ENCODE measurements at regions of chr7 and their contacts with region 1.

Region 1: DNA sequence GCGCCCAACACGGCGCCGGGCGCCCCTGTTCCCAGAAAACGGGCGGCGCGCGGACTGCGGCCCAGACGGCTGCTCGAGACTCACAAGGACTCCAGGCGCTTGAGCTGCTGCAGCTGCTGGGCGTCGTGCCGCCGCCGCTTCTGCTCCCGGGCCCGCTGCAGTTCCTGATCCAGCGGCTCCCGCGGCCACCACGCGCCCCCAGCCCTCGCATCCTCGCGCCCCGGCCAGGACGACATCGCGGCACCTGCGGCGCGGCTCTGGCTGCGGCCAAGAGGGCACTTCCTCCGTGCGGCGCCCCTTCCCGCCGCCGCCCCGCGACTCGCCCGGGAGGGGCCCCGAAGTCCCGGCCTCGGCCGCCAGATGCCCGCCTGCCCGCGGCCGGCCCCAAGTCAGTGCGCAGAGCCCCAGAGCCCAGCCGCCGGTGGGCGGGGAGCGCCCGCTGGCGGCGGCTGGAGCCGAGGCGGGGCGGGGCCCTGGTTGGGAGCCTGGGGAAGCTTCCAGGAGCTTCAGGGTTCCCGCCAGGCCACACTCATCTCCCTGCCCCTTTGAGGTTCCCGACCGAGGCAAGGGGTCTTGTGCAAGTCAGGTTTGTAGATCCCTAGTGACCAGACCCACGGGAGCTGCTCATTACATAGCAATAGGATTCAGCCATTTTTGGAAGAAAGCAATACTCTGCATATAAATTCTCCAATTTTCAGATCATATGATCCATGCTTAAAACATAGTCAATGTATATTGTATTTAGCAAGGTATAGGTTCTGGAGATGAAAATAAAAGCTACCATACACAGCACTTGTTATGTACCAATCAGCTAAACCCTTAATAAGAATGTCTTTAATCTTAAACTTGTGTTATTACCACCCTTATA is 14.2 kb upstream of the FKBP9 start:
- DNase-seq: peak; percentile 84 to 93 (median 93)
- ATAC-seq: peak; percentile 97
- H3K4me3 ChIP-seq: peak overlapping the region; percentile 62
- H3K27ac ChIP-seq: peak overlapping the region; percentile 89
- H3K4me1 ChIP-seq: no peaks in the 10 kb centered on the region
- H3K27me3 ChIP-seq: no peaks in the 10 kb centered on the region

Region 2: DNA sequence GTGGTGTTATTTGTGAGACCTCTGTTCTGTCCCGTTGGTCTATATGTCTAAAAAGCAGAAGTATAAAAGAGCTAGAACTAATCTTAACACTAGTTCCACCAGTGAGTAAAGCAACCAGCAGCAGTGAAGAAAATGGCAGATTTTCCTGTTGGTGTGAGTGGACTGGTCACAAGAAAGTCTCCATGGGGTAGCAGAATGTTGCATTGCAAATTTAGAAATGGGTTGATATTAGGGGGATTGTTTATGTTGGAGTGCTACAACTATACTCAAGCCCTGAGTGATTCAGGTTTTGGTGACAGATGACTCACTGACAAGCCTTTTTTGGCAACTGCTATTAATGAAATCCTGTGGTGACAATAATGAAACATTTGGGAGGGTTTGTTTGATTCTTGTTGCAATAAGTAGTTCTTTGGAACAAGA is 442.1 kb before region 1 on chr7:
- intact Hi-C with region 1: no loop called
- DNase-seq: no peak
- ATAC-seq: peak; percentile 17 to 65
- H3K4me3 ChIP-seq: no peak overlapping the region
- H3K27ac ChIP-seq: no peak overlapping the region
- H3K4me1 ChIP-seq: peaks cover 7% of the 10 kb centered on the region
- H3K27me3 ChIP-seq: no peaks in the 10 kb centered on the region

Region 3: DNA sequence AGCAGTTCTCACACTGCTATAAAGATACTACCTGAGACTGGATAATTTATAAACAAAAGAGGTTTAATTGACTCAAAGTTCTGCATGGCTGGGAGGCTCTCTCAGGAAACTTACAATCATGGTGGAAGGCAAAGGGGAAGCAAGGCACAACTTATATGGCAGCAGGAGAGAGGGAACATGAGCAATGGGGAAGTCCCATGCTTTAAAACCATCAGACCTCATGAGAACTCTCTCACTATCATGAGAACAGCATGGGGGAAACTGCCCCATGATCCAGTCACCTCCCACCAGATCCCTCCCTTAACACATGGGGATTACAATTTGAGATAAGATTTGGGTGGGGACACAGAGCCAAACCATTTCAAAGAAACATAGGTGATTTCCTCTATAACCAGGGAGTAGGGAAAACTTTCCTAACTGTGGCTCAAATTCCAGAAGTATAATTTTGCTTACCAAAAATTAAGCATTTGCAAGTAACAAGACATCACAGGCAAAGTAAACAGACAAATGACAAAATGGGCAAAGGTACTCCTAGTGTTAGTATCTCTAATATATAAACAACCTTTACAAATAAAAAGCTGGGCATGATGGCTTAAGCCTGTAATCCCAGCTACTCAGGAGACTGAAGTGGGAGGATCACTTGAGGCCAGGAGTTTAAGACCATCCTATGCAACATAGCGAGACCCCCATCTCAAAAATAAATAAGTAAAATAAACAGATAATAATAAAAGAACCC is 139.4 kb before region 1 on chr7:
- intact Hi-C with region 1: no loop called
- DNase-seq: no peak
- ATAC-seq: no peak
- H3K4me3 ChIP-seq: no peak overlapping the region
- H3K27ac ChIP-seq: no peak overlapping the region
- H3K4me1 ChIP-seq: no peaks in the 10 kb centered on the region
- H3K27me3 ChIP-seq: no peaks in the 10 kb centered on the region

Region 4: GRCh38 chr7:32846701-32847100 is 96.3 kb before region 1 on chr7:
- intact Hi-C with region 1: loop called in 2 of 4 experiments (anchors 5 to 10 kb)
- DNase-seq: peak; percentile 87 to 96 (median 93)
- ATAC-seq: peak; percentile 97 to 99
- H3K4me3 ChIP-seq: no peak overlapping the region
- H3K27ac ChIP-seq: no peak overlapping the region
- H3K4me1 ChIP-seq: no peaks in the 10 kb centered on the region
- H3K27me3 ChIP-seq: no peaks in the 10 kb centered on the region

Region 5: DNA sequence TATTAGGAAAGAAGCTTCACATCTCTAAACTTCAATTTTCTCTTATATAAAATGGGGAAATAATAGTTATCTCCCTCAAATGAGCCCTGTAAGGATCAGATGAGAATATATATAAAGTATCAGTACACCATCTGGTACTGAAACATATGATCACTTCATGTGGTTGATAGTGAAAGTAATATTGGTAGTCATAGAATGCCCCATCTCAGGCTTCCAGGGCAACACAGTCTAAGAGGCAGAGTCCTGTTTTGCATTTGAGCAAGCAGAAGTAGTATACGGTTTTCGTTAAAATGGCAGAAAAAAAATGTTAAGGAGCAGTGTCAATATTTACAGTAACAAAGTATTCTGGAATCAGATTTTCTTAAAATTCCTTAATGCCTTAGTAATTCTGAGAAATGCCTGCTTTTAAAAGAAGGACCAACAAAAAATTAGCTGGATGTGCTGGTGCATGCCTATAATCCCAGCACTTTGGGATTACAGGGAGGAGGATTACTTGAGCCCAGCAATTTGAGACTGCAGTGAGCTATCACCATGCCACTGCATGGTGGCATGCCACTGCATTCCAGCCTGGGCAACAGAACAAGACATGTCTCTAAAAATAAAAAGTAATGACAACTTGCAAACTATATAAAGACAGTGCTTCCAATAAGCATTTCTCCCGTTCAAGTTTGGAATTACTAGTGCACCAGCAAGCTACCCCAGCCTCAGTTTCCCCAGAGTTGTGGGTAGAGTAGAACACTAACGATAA is 71.2 kb before region 1 on chr7:
- intact Hi-C with region 1: no loop called
- DNase-seq: peak in 1 of 3 donors; percentile 51
- ATAC-seq: peak; percentile 46 to 62
- H3K4me3 ChIP-seq: no peak overlapping the region
- H3K27ac ChIP-seq: no peak overlapping the region
- H3K4me1 ChIP-seq: no peaks in the 10 kb centered on the region
- H3K27me3 ChIP-seq: no peaks in the 10 kb centered on the region

Region 6: GRCh38 chr7:33024189-33024757 is 81.3 kb after region 1 on chr7:
- intact Hi-C with region 1: no loop called
- DNase-seq: no peak
- ATAC-seq: no peak
- H3K4me3 ChIP-seq: no peak overlapping the region
- H3K27ac ChIP-seq: no peak overlapping the region
- H3K4me1 ChIP-seq: no peaks in the 10 kb centered on the region
- H3K27me3 ChIP-seq: no peaks in the 10 kb centered on the region

Region 7: GRCh38 chr7:33109005-33109757 is 166.2 kb after region 1 on chr7 and contains the start of gene RP9:
- intact Hi-C with region 1: loop called in 1 of 4 experiments (anchors 10 kb)
- DNase-seq: peak; percentile 68 to 90 (median 89)
- ATAC-seq: peak; percentile 90 to 92
- H3K4me3 ChIP-seq: peak within 1 kb of the TSS; percentile 98
- H3K27ac ChIP-seq: peak within 1 kb of the TSS; percentile 89
- H3K4me1 ChIP-seq: peaks cover 2% of the 10 kb centered on the region
- H3K27me3 ChIP-seq: no peaks in the 10 kb centered on the region
- total RNA-seq, gene RP9: 15.2 to 19.7 (median 15.6) TPM

Measured in right cardiac atrium (tissue), 5 donors.